Activated B cell treated with CpG ODN at 0.5 μM for 24 hours (primary cell): ENCODE measurements at regions of chr9 and their contacts with region 1.

Region 1: DNA sequence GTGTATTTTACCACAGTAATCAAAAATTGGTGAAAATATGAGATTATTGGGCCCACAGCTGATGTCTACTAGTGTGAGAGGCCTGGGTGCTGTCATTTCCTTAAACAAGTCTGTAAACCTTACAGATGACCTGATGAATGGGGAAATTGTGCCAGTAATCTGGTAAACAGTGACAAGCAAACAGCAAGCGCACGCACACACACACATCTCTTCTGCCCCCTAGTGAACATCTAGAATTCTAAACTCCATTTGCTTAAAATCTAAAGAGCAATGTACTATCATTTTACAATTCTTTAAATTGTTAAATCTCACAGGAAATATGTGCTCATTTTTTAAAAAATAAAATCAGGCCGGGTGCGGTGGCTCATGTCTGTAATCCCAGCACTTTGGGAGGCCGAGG is 7.5 kb upstream of the RAPGEF1 start:
- DNase-seq: no peak
- ATAC-seq: peak; percentile 55
- H3K4me3 Mint-ChIP-seq: no peak overlapping the region
- H3K27ac Mint-ChIP-seq: no peak overlapping the region
- H3K4me1 Mint-ChIP-seq: peaks cover 27% of the 10 kb centered on the region
- H3K27me3 Mint-ChIP-seq: no peaks in the 10 kb centered on the region
- CTCF ChIP-seq: no peak

Region 2: DNA sequence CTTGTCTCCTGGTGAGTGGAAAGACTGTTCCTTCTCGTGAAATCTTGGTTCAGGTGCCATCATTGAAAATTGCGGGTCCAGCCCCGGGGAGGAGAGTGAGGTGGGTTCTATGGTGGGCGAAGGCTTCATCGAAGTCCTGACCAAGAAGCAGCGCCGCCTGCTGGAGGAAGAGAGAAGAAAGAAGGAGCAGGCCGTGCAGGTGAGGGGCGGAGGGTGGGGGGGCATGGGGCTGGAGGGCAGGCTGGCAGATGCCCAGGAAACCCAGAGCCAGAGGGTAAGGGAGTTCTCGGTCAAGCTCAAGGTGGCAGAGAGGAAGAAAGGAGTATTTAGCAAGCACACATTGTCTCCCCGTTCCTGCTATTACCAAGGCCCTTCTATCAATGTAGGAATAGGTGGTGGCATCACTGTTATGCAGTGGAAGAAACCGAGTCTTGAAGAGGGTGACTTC is 268.9 kb before region 1 on chr9:
- CTCF ChIA-PET with region 1: no interaction called
- POLR2A ChIA-PET with region 1: no interaction called
- intact Hi-C with region 1: loop called (anchors 1 kb)
- DNase-seq: peak; percentile 56
- ATAC-seq: peak; percentile 57
- H3K4me3 Mint-ChIP-seq: no peak overlapping the region
- H3K27ac Mint-ChIP-seq: peak overlapping the region; percentile 18
- H3K4me1 Mint-ChIP-seq: no peaks in the 10 kb centered on the region
- H3K27me3 Mint-ChIP-seq: no peaks in the 10 kb centered on the region
- CTCF ChIP-seq: no peak

Region 3: GRCh38 chr9:131530920-131531832 is 216.2 kb before region 1 on chr9 and contains the start of gene UCK1:
- CTCF ChIA-PET with region 1: no interaction called
- POLR2A ChIA-PET with region 1: no interaction called
- intact Hi-C with region 1: loop called (anchors 5 kb)
- DNase-seq: peak; percentile 73
- ATAC-seq: peak; percentile 88
- H3K4me3 Mint-ChIP-seq: peak within 1 kb of the TSS; percentile 79
- H3K27ac Mint-ChIP-seq: no peak within 1 kb of the TSS
- H3K4me1 Mint-ChIP-seq: peaks cover 22% of the 10 kb centered on the region
- H3K27me3 Mint-ChIP-seq: no peaks in the 10 kb centered on the region
- CTCF ChIP-seq: no peak
- total RNA-seq, gene UCK1: 19.1 and 30.4 TPM in 2 replicates

Region 4: DNA sequence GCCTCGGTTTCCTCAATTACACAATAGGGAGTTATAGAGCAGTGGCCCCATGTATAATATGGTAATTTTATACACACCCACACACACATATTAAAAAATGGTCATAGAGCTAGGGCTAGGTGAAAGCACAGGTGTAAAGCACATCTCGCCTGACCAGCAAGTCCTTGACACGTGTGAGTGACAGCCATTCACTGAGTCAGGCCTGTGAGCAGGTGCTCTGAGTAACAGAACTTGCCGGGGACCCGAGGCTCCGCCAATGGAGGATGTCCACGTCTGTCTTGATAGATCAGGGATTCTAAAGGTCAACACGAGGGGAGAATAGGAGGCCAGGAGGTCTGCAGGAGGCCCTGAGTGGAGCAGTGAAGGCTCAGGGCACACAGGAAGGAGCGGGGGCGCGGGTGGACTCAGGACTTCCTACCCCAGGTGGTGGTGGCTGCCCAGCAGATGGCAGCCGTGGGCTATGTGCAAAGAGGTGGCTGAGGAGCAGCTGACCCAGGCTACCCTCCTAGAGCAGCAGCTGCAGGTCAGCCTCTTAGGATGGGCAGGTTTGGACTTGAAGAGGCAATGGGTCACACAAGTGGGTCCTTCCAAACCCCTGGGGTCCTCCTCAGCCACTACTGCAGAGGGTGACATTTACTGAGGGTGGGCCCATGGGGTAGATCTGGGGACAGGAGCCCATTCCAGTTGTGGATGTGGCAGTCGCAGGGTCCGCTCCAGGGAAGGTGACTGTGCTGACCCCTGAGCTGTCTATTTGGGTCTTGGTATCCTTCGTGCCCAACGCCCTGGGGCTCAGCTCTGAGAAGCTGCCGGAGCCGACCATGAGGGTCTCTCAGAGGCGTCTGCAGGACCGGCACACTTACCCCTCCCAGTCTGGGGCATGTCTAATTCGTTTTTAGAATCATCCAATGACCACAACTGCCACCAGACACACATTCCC is 156.2 kb before region 1 on chr9:
- CTCF ChIA-PET with region 1: interaction called, 42 read pairs
- POLR2A ChIA-PET with region 1: interaction called, 4 read pairs
- intact Hi-C with region 1: loop called (anchors 1 kb)
- DNase-seq: peak; percentile 67
- ATAC-seq: peak; percentile 88
- H3K4me3 Mint-ChIP-seq: no peak overlapping the region
- H3K27ac Mint-ChIP-seq: peak overlapping the region; percentile 51
- H3K4me1 Mint-ChIP-seq: peaks cover 34% of the 10 kb centered on the region
- H3K27me3 Mint-ChIP-seq: no peaks in the 10 kb centered on the region
- CTCF ChIP-seq: no peak